CD4-positive, alpha-beta memory T cell (primary cell): ENCODE measurements at regions of chr3 and their contacts with region 1.

Region 1: GRCh38 chr3:148861277-148861869 is 3.7 kb upstream of the CPA3 start:
- DNase-seq: peak in 4 of 5 donors; percentile 3 to 28 (median 20)
- H3K4me3 ChIP-seq: no peak overlapping the region
- H3K4me3 Mint-ChIP-seq: no peak overlapping the region
- H3K27ac ChIP-seq: no peak overlapping the region
- H3K27ac Mint-ChIP-seq: no peak overlapping the region
- H3K4me1 ChIP-seq: no peaks in the 10 kb centered on the region
- H3K4me1 Mint-ChIP-seq: no peaks in the 10 kb centered on the region
- H3K27me3 ChIP-seq: no peaks in the 10 kb centered on the region
- H3K27me3 Mint-ChIP-seq: peaks cover 11 to 14% of the 10 kb centered on the region in 2 donors

Region 2: DNA sequence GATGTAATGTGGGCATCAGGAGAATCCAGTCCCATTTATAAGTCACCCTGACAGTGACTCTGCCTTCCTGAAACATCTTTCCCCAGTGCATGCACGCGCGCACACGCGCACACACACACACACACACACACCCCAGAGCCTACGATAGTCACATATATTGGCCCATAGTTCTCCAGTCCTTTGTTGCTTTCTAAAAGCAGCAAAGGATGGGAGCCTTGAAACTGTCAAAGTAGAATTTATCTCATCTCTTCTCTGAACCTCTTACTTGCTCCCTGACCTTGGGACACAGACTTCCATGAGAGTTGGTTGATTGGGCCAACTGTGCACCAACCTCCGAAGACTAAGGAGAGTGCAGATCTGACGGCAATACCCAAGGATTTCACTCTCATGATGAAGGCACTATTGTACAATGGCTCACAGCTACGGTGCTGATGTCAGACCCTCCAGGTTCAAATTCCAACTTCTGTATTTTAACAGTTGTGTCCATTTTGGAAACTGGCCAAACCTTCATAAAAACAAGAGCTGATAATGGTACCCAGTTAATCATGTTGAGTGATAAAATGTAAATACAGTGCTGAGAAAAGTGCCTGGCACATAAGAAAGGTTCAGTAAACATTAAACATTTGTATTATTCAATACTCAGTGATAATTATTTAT is 12.0 kb after region 1 on chr3:
- CTCF ChIA-PET with region 1: interaction called, 17 read pairs
- POLR2A ChIA-PET with region 1: no interaction called
- intact Hi-C with region 1: no loop called
- DNase-seq: no peak
- H3K4me3 ChIP-seq: no peak overlapping the region
- H3K4me3 Mint-ChIP-seq: no peak overlapping the region
- H3K27ac ChIP-seq: no peak overlapping the region
- H3K27ac Mint-ChIP-seq: no peak overlapping the region
- H3K4me1 ChIP-seq: no peaks in the 10 kb centered on the region
- H3K4me1 Mint-ChIP-seq: no peaks in the 10 kb centered on the region
- H3K27me3 ChIP-seq: no peaks in the 10 kb centered on the region
- H3K27me3 Mint-ChIP-seq: peaks cover 5 to 6% of the 10 kb centered on the region in 2 donors

Region 3: GRCh38 chr3:148943506-148944205 is 82.3 kb after region 1 on chr3:
- CTCF ChIA-PET with region 1: interaction called, 81 read pairs
- POLR2A ChIA-PET with region 1: no interaction called
- intact Hi-C with region 1: loop called (anchors 1 kb)
- DNase-seq: peak in 4 of 5 donors; percentile 32 to 47 (median 41)
- H3K4me3 ChIP-seq: no peak overlapping the region
- H3K4me3 Mint-ChIP-seq: no peak overlapping the region
- H3K27ac ChIP-seq: no peak overlapping the region
- H3K27ac Mint-ChIP-seq: no peak overlapping the region
- H3K4me1 ChIP-seq: no peaks in the 10 kb centered on the region
- H3K4me1 Mint-ChIP-seq: no peaks in the 10 kb centered on the region
- H3K27me3 ChIP-seq: no peaks in the 10 kb centered on the region
- H3K27me3 Mint-ChIP-seq: peaks cover 0 to 6% of the 10 kb centered on the region in 2 donors

Region 4: DNA sequence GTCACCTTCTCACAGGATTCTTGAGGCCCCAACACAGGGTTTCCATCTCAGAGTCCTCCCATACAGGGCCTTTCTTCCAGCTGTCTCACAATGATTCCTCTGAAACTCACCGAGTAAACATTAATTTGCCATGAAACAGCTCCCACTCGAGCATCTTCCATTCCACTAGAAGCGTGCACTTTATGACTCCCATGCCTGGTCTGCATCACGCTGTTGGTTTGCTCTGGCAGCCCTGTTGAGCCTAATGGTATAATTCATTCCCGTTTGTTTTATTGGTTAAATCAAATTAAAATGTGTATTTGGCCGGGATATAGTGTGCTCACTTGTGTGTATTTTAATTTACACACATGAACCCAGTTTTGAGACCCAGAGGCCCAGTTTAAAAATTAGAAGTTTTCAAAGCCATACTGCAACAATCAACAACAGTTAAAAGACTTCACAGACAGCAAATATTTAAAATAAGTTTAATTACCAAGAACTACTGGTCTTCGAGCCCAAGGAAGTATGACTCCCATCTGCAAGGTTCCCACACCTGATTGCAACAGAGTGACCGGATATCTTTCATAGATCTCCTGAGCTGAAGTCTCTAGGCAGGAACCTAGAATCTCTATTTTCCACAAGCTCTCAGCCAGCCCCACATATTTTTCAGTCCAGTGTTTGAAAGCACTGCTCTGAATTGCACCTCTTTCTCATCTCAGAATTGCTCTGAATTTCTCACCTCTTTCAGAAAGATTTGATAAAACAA is 87.7 kb after region 1 on chr3:
- CTCF ChIA-PET with region 1: interaction called, 81 read pairs
- POLR2A ChIA-PET with region 1: no interaction called
- intact Hi-C with region 1: loop called (anchors 1 kb)
- DNase-seq: no peak
- H3K4me3 ChIP-seq: no peak overlapping the region
- H3K4me3 Mint-ChIP-seq: no peak overlapping the region
- H3K27ac ChIP-seq: no peak overlapping the region
- H3K27ac Mint-ChIP-seq: no peak overlapping the region
- H3K4me1 ChIP-seq: no peaks in the 10 kb centered on the region
- H3K4me1 Mint-ChIP-seq: no peaks in the 10 kb centered on the region
- H3K27me3 ChIP-seq: no peaks in the 10 kb centered on the region
- H3K27me3 Mint-ChIP-seq: peaks cover 0 to 2% of the 10 kb centered on the region in 2 donors

Region 5: GRCh38 chr3:149273096-149273751 is 411.9 kb after region 1 on chr3:
- CTCF ChIA-PET with region 1: interaction called, 5 read pairs
- POLR2A ChIA-PET with region 1: no interaction called
- intact Hi-C with region 1: loop called (anchors 1 kb)
- DNase-seq: peak in 4 of 5 donors; percentile 58 to 69 (median 62)
- H3K4me3 ChIP-seq: no peak overlapping the region
- H3K4me3 Mint-ChIP-seq: no peak overlapping the region
- H3K27ac ChIP-seq: no peak overlapping the region
- H3K27ac Mint-ChIP-seq: no peak overlapping the region
- H3K4me1 ChIP-seq: peaks cover 17% of the 10 kb centered on the region
- H3K4me1 Mint-ChIP-seq: peaks cover 13 to 15% (median 14%) of the 10 kb centered on the region in 4 donors
- H3K27me3 ChIP-seq: no peaks in the 10 kb centered on the region
- H3K27me3 Mint-ChIP-seq: no peaks in the 10 kb centered on the region